ENCODE measurements at regions of chr19 and their contacts with region 1.

Region 1: DNA sequence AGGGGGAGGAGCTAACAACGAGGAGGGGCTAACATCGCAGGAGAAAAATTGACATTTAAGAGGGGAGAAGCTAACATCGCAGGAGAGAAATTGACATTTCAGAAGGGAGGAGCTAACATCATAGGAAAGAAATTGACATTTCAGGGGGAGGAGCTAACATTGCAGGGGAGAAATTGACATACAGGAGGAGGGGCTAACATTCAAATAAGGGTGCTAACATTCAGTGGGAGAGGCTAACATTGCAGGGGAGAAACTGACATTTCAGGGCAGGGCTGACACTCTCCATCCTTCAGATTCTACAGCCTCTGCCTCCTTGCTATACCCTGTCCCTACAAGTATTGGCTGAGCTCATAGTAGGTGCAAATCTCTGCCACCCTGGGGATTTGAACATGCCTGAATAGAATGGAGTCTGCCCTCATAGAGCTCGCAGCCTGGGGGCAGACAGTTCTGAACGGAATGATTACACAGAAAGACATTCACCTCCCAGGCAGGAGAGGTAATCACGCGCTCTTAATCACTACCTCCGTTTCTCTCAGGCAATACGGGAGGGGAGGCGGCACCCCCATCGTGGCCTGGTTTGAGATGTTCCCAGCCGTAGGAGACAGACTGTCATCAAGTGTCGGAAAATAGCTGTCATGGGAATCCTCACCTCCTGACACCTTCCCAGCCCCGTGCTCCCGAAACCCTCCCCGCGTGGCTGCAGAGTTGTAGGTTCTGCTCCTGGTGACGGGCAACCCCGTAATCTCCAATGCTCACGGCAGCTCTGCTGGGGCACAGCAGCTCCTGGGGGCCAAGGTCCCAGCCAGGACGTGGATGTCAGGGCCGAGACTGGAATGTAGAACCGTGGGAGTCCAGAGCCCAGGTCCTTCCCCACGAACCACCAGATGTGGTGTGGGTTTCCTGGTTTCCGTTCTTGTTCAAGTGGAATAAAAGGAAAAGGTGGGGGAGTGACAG is 9.5 kb downstream of the GPR32 start:
- DNase-seq: no peak

Region 2: GRCh38 chr19:50050384-50051224 is 729.2 kb before region 1 on chr19:
- intact Hi-C with region 1: no loop called
- DNase-seq: peak; percentile 95

Region 3: GRCh38 chr19:50357178-50358100 is 422.3 kb before region 1 on chr19:
- intact Hi-C with region 1: loop called (anchors 10 kb)
- DNase-seq: peak; percentile 93

Region 4: DNA sequence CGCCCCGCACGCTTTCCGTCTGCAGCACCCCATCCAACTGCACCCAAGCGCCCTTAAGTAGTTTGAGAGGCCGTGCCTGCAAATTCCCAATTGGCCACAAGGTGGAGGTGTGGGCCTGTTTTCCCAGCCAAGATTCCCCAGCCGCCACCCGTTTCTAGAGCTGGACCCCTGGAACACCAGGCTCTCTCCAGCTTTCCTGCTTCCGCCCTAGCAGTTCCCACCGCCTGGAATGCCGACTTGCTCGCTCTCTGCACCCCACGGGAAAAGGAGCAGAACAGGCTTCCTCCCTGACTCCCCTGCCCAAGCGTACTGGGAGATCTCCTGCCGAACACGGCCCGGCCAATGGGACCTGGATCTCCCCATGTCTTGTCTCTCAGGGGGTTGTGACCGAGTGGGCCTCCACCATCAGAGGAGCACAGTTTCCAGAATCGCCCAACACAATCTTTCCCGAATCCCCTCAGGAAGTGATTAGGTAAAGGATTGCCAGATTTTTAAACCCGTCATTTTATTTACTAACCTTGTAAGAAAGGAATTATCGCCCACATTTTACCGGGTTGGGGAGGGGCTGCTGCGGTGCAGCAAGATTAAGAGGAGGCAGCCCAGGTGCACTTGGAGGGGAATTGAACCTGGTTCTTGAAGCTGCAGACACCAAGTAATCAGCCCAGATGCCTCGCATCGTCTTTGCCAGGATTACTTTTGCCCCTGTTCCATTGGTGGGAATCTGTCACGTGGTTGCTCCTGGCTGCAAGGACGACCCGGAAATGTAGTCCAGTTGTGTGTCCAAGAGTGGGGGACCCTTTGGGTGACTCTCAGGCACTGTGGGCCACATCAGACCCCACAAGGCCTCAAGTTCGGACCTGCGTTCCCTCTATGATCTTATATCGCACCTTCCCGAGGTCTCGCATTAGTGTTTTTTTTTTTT is 410.9 kb before region 1 on chr19:
- intact Hi-C with region 1: loop called in 1 of 2 experiments (anchors 10 kb)
- DNase-seq: peak; percentile 93

Region 5: DNA sequence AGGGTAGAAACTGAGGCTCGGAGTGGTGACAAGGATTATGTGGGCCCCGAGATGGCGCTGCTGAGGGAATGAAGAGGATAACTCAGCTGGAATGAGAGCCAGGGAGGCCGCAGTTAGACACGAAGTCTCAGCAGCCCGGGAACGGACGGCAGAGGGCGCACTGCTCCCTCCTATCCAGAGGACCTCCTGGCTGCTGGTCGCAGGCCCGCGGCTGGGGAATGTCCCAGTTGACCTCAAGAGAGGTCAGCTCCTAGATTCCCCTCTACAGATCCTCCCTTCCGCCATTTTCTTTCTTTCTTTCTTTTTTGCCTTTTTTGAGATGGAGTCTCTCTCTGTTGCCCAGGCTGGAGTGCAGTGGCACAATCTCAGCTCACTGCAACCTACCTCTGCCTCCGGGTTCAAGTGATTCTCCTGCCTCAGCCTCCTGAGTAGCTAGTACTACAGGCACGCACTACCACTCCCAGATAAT is 242.0 kb before region 1 on chr19:
- intact Hi-C with region 1: loop called in 1 of 2 experiments (anchors 5 kb)
- DNase-seq: peak; percentile 90

Measured in posterior vena cava (tissue), 2 donors.